ENCODE measurements at regions of chr3 and their contacts with region 1.

Region 1: GRCh38 chr3:49177073-49177472 is 5.7 kb downstream of the KLHDC8B start:
- DNase-seq: no peak
- H3K4me3 ChIP-seq: no peak overlapping the region
- H3K27ac ChIP-seq: no peak overlapping the region
- H3K4me1 ChIP-seq: no peaks in the 10 kb centered on the region
- H3K27me3 ChIP-seq: no peaks in the 10 kb centered on the region
- CTCF ChIP-seq: no peak

Region 2: GRCh38 chr3:49454898-49455695 is 278.0 kb after region 1 on chr3:
- intact Hi-C with region 1: loop called (anchors 5 kb)
- DNase-seq: no peak
- H3K4me3 ChIP-seq: no peak overlapping the region
- H3K27ac ChIP-seq: no peak overlapping the region
- H3K4me1 ChIP-seq: no peaks in the 10 kb centered on the region
- H3K27me3 ChIP-seq: no peaks in the 10 kb centered on the region
- CTCF ChIP-seq: no peak

Measured in colonic mucosa (tissue), 4 donors.